ENCODE measurements at regions of chr6 and their contacts with region 1.

Region 1: GRCh38 chr6:14622909-14623505 is 505.4 kb downstream of the CD83 start:
- DNase-seq: no peak
- H3K4me3 ChIP-seq: no peak overlapping the region
- H3K27ac ChIP-seq: no peak overlapping the region
- H3K4me1 ChIP-seq: no peaks in the 10 kb centered on the region
- H3K27me3 ChIP-seq: no peaks in the 10 kb centered on the region
- CTCF ChIP-seq: no peak

Region 2: DNA sequence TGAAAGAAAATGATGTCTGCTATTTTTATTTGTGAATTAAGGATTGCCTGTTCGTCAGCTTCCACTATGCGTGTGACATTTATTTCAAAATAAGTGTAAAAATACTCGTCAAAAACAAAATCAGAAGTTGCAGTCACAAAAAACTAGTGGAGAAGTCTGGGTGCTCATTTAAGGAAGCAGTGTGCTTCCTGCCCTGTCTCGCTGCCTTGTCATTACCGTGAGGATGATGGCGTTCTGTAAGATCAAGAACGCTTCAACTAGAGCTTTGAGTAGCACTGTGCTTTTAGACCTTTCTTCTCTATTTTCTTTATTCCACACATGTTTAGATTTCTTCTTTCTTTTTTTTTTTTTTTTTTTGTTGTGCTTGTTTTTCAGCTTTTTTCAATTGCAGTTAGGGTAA is 1481.6 kb before region 1 on chr6:
- CTCF ChIA-PET with region 1: no interaction called
- POLR2A ChIA-PET with region 1: interaction called, 10 read pairs
- intact Hi-C with region 1: no loop called
- DNase-seq: no peak
- H3K4me3 ChIP-seq: no peak overlapping the region
- H3K27ac ChIP-seq: no peak overlapping the region
- H3K4me1 ChIP-seq: no peaks in the 10 kb centered on the region
- H3K27me3 ChIP-seq: peaks cover 18% of the 10 kb centered on the region; the same call in 1 of the 2 replicates
- CTCF ChIP-seq: no peak